Activated B cell treated with CpG ODN at 0.5 μM for 24 hours (primary cell): ENCODE measurements at regions of chr2 and their contacts with region 1.

Region 1: GRCh38 chr2:84881581-84882414 is 914 bp upstream of the TRABD2A start:
- DNase-seq: peak; percentile 75
- ATAC-seq: peak; percentile 75
- H3K4me3 Mint-ChIP-seq: peak overlapping the region; percentile 94
- H3K27ac Mint-ChIP-seq: peak overlapping the region; percentile 93
- H3K4me1 Mint-ChIP-seq: peaks cover 40% of the 10 kb centered on the region
- H3K27me3 Mint-ChIP-seq: no peaks in the 10 kb centered on the region
- CTCF ChIP-seq: no peak

Region 2: GRCh38 chr2:84495539-84496146 is 386.2 kb before region 1 on chr2:
- CTCF ChIA-PET with region 1: interaction called, 7 read pairs
- POLR2A ChIA-PET with region 1: interaction called, 7 read pairs
- intact Hi-C with region 1: loop called (anchors 1 kb)
- DNase-seq: no peak
- ATAC-seq: peak; percentile 99
- H3K4me3 Mint-ChIP-seq: no peak overlapping the region
- H3K27ac Mint-ChIP-seq: no peak overlapping the region
- H3K4me1 Mint-ChIP-seq: peaks cover 2% of the 10 kb centered on the region
- H3K27me3 Mint-ChIP-seq: no peaks in the 10 kb centered on the region
- CTCF ChIP-seq: peak; percentile 62

Region 3: GRCh38 chr2:84781942-84782716 is 99.7 kb before region 1 on chr2:
- CTCF ChIA-PET with region 1: no interaction called
- POLR2A ChIA-PET with region 1: no interaction called
- intact Hi-C with region 1: loop called (anchors 5 kb)
- DNase-seq: no peak
- ATAC-seq: peak; percentile 99
- H3K4me3 Mint-ChIP-seq: peak overlapping the region; percentile 28
- H3K27ac Mint-ChIP-seq: peak overlapping the region; percentile 78
- H3K4me1 Mint-ChIP-seq: peaks cover 37% of the 10 kb centered on the region
- H3K27me3 Mint-ChIP-seq: no peaks in the 10 kb centered on the region
- CTCF ChIP-seq: no peak

Region 4: DNA sequence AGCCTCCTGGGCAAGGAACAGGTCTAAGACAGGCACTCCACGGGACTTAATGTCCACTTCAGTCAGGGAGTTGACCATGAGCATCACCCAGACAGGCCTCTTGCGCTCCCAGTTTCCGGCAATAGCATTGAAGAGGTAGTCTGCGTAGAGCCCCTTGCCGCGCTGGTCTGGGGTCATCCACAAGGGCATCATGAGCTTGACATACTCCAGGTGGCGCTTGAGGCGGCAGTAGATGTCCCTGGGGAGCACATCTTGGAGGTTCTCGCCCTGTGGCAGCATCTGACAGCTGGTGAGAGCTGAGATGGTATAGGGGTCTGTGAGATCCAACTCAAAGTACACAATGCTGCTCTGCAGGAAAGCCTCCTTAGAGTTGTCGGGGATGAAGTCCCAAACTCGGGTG is 11.5 kb before region 1 on chr2:
- CTCF ChIA-PET with region 1: interaction called, 7 read pairs
- POLR2A ChIA-PET with region 1: no interaction called
- intact Hi-C with region 1: loop called (anchors 1 kb)
- DNase-seq: no peak
- ATAC-seq: peak; percentile 70
- H3K4me3 Mint-ChIP-seq: no peak overlapping the region
- H3K27ac Mint-ChIP-seq: no peak overlapping the region
- H3K4me1 Mint-ChIP-seq: peaks cover 3% of the 10 kb centered on the region
- H3K27me3 Mint-ChIP-seq: peaks cover 4% of the 10 kb centered on the region
- CTCF ChIP-seq: no peak

Region 5: DNA sequence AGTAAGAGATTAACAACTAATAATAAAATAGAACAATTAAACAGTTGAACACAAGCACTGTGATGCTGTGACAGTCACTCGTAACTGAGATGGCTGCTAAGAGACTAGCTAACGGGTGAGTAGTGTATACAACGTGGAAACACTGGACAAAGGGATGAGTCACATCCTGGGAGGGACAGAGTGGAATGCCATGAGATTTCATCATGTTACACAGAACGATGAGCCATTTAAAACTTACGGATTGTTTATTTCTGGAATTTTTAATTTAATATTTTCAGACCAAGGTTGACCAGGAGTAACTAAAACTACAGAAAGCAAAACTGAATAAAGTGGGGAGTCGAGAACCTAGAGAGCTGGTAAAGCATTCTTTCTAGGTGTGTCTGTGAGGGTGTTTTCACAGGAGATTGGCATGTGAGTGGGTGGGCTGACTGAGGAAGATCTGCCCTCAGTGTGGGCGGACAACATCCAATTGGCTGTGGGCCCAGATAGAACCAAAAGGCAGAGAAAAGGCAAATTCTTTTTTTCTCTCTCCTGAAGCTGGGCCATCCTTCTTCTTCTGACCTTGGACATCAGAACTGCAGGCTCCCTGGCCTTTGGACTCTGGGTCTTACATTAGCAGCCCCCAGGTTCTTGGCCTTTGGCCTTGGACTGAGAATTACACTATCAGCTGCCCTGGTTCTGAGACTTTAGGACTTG is 38.2 kb after region 1 on chr2:
- CTCF ChIA-PET with region 1: interaction called, 68 read pairs
- POLR2A ChIA-PET with region 1: interaction called, 33 read pairs
- intact Hi-C with region 1: loop called (anchors 1 kb)
- DNase-seq: no peak
- ATAC-seq: peak; percentile 59
- H3K4me3 Mint-ChIP-seq: peak overlapping the region; percentile 73
- H3K27ac Mint-ChIP-seq: peak overlapping the region; percentile 96
- H3K4me1 Mint-ChIP-seq: peaks cover 63% of the 10 kb centered on the region
- H3K27me3 Mint-ChIP-seq: no peaks in the 10 kb centered on the region
- CTCF ChIP-seq: no peak

Region 6: GRCh38 chr2:84991404-84992151 is 109.8 kb after region 1 on chr2:
- CTCF ChIA-PET with region 1: no interaction called
- POLR2A ChIA-PET with region 1: no interaction called
- intact Hi-C with region 1: no loop called
- DNase-seq: no peak
- ATAC-seq: no peak
- H3K4me3 Mint-ChIP-seq: no peak overlapping the region
- H3K27ac Mint-ChIP-seq: no peak overlapping the region
- H3K4me1 Mint-ChIP-seq: peaks cover 29% of the 10 kb centered on the region
- H3K27me3 Mint-ChIP-seq: no peaks in the 10 kb centered on the region
- CTCF ChIP-seq: no peak

Region 7: DNA sequence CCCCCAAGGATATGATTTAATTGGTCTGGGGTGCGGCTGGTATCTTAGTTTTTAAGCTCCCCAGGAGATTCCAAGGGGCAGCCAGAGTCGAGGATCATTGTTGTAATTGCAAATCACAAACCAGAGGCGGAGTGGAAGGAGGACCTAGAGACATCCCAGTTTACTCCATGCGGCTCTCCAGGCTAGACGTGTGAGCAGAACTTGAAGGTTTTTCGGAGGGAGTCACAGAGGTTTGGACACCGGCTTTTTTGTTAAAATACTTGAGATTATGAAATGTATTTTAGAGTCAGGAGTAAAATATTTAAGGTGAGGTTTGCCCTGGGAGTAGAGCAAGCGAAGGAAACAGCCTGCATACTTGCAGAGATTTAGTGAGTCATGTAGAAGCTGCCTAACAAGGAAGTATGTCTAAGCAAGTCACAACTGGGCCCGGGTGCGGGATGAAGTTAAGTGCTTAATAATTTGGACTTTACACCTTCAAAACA is 406.5 kb after region 1 on chr2:
- CTCF ChIA-PET with region 1: no interaction called
- POLR2A ChIA-PET with region 1: no interaction called
- intact Hi-C with region 1: loop called (anchors 5 kb)
- DNase-seq: no peak
- ATAC-seq: no peak
- H3K4me3 Mint-ChIP-seq: no peak overlapping the region
- H3K27ac Mint-ChIP-seq: no peak overlapping the region
- H3K4me1 Mint-ChIP-seq: peaks cover 12% of the 10 kb centered on the region
- H3K27me3 Mint-ChIP-seq: peaks cover 2% of the 10 kb centered on the region
- CTCF ChIP-seq: no peak